ENCODE measurements at regions of chr13 and their contacts with region 1.

Region 1: GRCh38 chr13:40069173-40070044 is 413.9 kb downstream of the COG6 start:
- DNase-seq: peak; percentile 36 to 94 (median 83)

Region 2: DNA sequence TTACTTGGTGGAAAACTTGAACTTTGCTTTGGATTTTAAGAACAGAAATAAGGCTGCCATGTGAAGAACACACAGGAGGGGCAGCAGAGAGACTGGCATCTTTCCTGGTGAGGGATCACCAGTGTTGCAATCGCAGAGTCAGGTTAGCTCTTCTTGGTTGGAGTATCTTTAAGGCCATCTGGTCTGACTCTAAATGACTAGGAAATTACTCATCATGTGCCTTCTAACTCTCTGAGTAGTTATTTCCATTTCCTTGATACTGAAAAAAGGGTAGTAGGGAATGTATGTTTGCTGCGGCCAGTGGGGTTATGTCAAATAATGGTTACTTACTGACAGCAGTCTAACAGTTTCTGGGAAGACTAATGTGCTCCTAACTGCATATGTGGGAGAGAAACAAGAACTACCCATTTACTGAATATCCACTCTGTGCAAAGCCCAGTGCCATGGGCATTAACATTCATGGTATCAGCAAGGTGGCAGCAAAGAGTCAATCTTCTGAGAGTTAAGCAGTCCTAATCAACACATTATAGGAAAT is 291.8 kb before region 1 on chr13:
- intact Hi-C with region 1: loop called (anchors 10 kb)
- DNase-seq: no peak

Region 3: DNA sequence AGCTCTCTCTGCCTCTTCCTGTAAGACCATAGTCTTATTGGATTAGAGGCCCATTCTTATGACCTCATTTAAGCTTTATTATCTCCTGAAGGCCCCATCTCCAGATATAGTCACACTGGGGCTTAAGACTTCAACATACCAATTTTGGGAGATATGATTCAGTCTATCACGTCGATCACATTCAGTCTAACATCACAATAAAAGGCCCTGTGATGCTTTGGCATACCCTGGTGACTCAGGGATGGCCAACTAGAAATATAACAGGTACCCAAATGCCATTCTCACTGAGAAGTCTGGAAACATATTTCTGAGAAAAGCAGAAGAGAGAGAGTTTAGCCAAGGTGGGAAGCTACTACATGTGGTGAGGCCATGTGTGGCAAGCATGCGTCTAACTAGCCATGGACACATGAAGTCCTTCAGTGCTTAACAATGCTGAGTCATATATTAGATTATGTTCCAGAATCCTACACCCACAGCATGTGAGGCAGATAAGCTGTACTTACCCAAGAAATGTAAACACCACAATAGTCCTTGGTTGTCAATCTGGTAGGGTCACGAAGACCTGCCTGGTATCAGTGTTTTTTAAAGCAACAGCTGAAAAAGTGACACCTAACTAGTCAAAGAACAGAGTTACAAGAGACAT is 111.9 kb after region 1 on chr13:
- intact Hi-C with region 1: loop called (anchors 10 kb)
- DNase-seq: no peak

Measured in posterior cingulate gyrus (tissue), 11 donors.